Activated CD4-positive, alpha-beta memory T cell treated with anti-CD3 and anti-CD28 coated beads, Interleukin-2, amount 10 ng/mL, durations not matched to agents 7 days and 5 days (primary cell): ENCODE measurements at regions of chr10 and their contacts with region 1.

Region 1: DNA sequence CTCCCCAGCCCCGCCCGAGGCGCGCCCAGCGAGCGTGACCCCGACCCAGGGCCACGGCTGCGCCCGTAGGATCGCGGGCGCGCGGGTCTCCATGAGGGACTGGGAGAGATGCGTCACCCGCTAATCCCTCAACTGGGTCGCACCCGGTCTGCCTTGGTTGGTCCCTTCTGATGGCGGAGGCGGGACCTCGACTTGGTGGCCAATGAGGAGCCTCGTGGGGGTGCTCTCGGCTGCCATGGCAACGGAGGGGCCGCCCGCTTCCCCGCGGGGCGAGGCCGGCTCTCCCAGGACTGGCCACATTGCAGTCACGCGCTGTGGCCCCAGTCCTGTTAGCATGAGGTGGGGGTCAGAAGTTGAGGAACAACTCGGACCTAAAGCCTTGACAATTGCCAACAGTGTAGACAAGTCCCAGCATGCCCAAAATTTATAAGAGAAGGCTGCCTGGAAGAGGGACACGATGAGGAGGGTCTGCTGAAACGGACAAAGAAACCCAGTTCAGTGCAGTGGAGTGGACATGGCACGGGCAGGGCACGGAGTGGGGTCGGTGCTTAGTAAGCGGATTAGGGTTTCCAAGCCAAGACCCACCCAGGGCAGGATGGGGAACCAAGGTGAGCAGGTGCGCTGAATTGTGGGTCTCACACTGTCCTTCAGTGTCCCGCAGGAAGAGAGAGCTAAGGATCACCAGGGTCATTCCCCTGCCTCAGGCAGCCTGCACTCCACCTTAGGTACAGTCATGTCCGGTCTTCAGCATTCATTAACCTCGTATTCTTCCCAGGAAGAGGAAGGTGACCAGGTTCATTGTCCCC is 24.4 kb downstream of the DDIT4 start:
- DNase-seq: peak; percentile 96
- H3K4me3 Mint-ChIP-seq: peak overlapping the region; percentile 73
- H3K27ac Mint-ChIP-seq: peak overlapping the region; percentile 97
- H3K4me1 Mint-ChIP-seq: peaks cover 66% of the 10 kb centered on the region
- H3K27me3 Mint-ChIP-seq: no peaks in the 10 kb centered on the region

Region 2: GRCh38 chr10:72215652-72216549 is 82.3 kb before region 1 on chr10 and contains the starts of genes ANAPC16 and ASCC1:
- CTCF ChIA-PET with region 1: no interaction called
- POLR2A ChIA-PET with region 1: interaction called, 20 read pairs
- DNase-seq: peak; percentile 94
- H3K4me3 Mint-ChIP-seq: peak within 1 kb of the TSS; percentile 98
- H3K27ac Mint-ChIP-seq: peak within 1 kb of the TSS; percentile 99
- H3K4me1 Mint-ChIP-seq: peaks cover 61% of the 10 kb centered on the region
- H3K27me3 Mint-ChIP-seq: no peaks in the 10 kb centered on the region
- total RNA-seq, gene ANAPC16: 94.2 to 101 TPM
- total RNA-seq, gene ASCC1: 35.5 to 36.2 TPM

Region 3: DNA sequence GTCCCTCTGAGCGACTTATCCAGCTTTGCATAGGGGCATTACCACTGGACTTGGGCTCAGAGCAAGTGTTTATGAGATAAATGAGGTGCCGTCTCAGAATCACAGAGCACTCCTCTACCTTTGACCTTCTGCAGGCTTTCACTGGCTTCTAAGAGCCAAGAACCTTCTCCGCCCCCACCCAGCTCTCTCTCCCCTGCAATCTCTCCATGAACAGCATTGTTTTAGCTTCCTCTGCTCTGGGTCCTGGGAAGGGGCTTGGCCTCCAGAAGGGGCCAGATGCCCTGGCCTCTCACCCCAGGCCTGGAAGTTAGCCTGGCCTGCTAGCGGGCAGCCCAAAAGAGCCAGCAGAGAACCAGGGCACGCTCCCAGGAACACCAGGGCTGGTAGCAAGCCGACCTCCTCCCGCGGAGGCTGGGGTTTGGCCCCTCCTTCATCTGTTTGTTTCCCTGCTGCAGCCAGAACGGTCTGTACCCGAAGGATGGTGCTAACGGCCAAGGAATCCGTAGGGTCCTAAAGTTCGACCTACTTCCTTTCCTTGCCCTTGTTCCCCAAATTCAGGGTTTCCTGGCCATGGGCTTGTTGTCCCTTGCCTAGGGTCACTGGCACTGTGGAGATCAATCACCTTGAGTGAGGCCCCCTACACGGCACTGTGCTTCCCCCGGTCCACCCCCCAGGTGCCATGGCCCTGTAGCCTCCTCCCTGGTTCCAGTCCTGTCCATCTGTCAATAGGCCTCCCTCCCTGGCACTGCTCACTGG is 43.2 kb before region 1 on chr10:
- CTCF ChIA-PET with region 1: interaction called, 14 read pairs
- POLR2A ChIA-PET with region 1: interaction called, 59 read pairs
- DNase-seq: peak; percentile 50
- H3K4me3 Mint-ChIP-seq: peak overlapping the region; percentile 48
- H3K27ac Mint-ChIP-seq: peak overlapping the region; percentile 78
- H3K4me1 Mint-ChIP-seq: peaks cover 73% of the 10 kb centered on the region
- H3K27me3 Mint-ChIP-seq: no peaks in the 10 kb centered on the region

Region 4: GRCh38 chr10:72285972-72286521 is 12.1 kb before region 1 on chr10:
- CTCF ChIA-PET with region 1: interaction called, 6 read pairs
- POLR2A ChIA-PET with region 1: interaction called, 20 read pairs
- DNase-seq: no peak
- H3K4me3 Mint-ChIP-seq: no peak overlapping the region
- H3K27ac Mint-ChIP-seq: peak overlapping the region; percentile 49
- H3K4me1 Mint-ChIP-seq: peaks cover 42% of the 10 kb centered on the region
- H3K27me3 Mint-ChIP-seq: no peaks in the 10 kb centered on the region

Region 5: GRCh38 chr10:72354478-72355213 is 56.5 kb after region 1 on chr10 and contains the start of gene DNAJB12:
- CTCF ChIA-PET with region 1: no interaction called
- POLR2A ChIA-PET with region 1: no interaction called
- DNase-seq: peak; percentile 91
- H3K4me3 Mint-ChIP-seq: peak within 1 kb of the TSS; percentile 95
- H3K27ac Mint-ChIP-seq: peak within 1 kb of the TSS; percentile 91
- H3K4me1 Mint-ChIP-seq: peaks cover 33% of the 10 kb centered on the region
- H3K27me3 Mint-ChIP-seq: peaks cover 2% of the 10 kb centered on the region
- total RNA-seq, gene DNAJB12: 23.8 to 26.7 TPM

Region 6: GRCh38 chr10:72435570-72435969 is 137.4 kb after region 1 on chr10:
- CTCF ChIA-PET with region 1: no interaction called
- POLR2A ChIA-PET with region 1: no interaction called
- DNase-seq: no peak
- H3K4me3 Mint-ChIP-seq: no peak overlapping the region
- H3K27ac Mint-ChIP-seq: no peak overlapping the region
- H3K4me1 Mint-ChIP-seq: no peaks in the 10 kb centered on the region
- H3K27me3 Mint-ChIP-seq: no peaks in the 10 kb centered on the region